ENCODE measurements at regions of chr19 and their contacts with region 1.

Region 1: GRCh38 chr19:2475702-2476450 is at the start of gene GADD45B:
- DNase-seq: peak; percentile 96 to 98 (median 96)
- H3K4me3 ChIP-seq: peak within 1 kb of the TSS; percentile 71 to 97
- H3K4me3 Mint-ChIP-seq: peak within 1 kb of the TSS; percentile 99 to 100 (median 100)
- H3K27ac ChIP-seq: peak within 1 kb of the TSS; percentile 76
- H3K27ac Mint-ChIP-seq: peak within 1 kb of the TSS; percentile 95 to 99 (median 97)
- H3K4me1 ChIP-seq: peaks cover 25% of the 10 kb centered on the region
- H3K4me1 Mint-ChIP-seq: peaks cover 6 to 36% (median 14%) of the 10 kb centered on the region in 4 donors
- H3K27me3 ChIP-seq: no peaks in the 10 kb centered on the region
- H3K27me3 Mint-ChIP-seq: no peaks in the 10 kb centered on the region
- total RNA-seq, gene GADD45B: 88.2 to 88.3 TPM

Region 2: GRCh38 chr19:1774999-1775772 is 700.7 kb before region 1 on chr19:
- CTCF ChIA-PET with region 1: no interaction called
- POLR2A ChIA-PET with region 1: no interaction called
- intact Hi-C with region 1: no loop called
- DNase-seq: peak in 1 of 5 donors; percentile 16
- H3K4me3 ChIP-seq: no peak overlapping the region
- H3K4me3 Mint-ChIP-seq: no peak overlapping the region
- H3K27ac ChIP-seq: no peak overlapping the region
- H3K27ac Mint-ChIP-seq: no peak overlapping the region
- H3K4me1 ChIP-seq: no peaks in the 10 kb centered on the region
- H3K4me1 Mint-ChIP-seq: peaks cover 0 to 6% (median under 1%) of the 10 kb centered on the region in 4 donors
- H3K27me3 ChIP-seq: peaks cover 39% of the 10 kb centered on the region
- H3K27me3 Mint-ChIP-seq: peaks cover 44 to 53% of the 10 kb centered on the region in 2 donors

Region 3: GRCh38 chr19:2355168-2356035 is 120.5 kb before region 1 on chr19:
- CTCF ChIA-PET with region 1: no interaction called
- POLR2A ChIA-PET with region 1: no interaction called
- intact Hi-C with region 1: no loop called
- DNase-seq: no peak
- H3K4me3 ChIP-seq: no peak overlapping the region
- H3K4me3 Mint-ChIP-seq: no peak overlapping the region
- H3K27ac ChIP-seq: no peak overlapping the region
- H3K27ac Mint-ChIP-seq: no peak overlapping the region
- H3K4me1 ChIP-seq: no peaks in the 10 kb centered on the region
- H3K4me1 Mint-ChIP-seq: peaks cover under 1 to 2% (median 1%) of the 10 kb centered on the region in 4 donors
- H3K27me3 ChIP-seq: no peaks in the 10 kb centered on the region
- H3K27me3 Mint-ChIP-seq: peaks cover 1% of the 10 kb centered on the region in 2 donors

Region 4: GRCh38 chr19:2391118-2391725 is 84.7 kb before region 1 on chr19:
- CTCF ChIA-PET with region 1: no interaction called
- POLR2A ChIA-PET with region 1: no interaction called
- intact Hi-C with region 1: no loop called
- DNase-seq: peak; percentile 50 to 66 (median 51)
- H3K4me3 ChIP-seq: no peak overlapping the region
- H3K4me3 Mint-ChIP-seq: peak overlapping the region in 1 of 8 donors; percentile 78
- H3K27ac ChIP-seq: no peak overlapping the region
- H3K27ac Mint-ChIP-seq: peak overlapping the region in 2 of 7 donors; percentile 53 to 69
- H3K4me1 ChIP-seq: no peaks in the 10 kb centered on the region
- H3K4me1 Mint-ChIP-seq: peaks cover 2 to 15% (median 4%) of the 10 kb centered on the region in 4 donors
- H3K27me3 ChIP-seq: no peaks in the 10 kb centered on the region
- H3K27me3 Mint-ChIP-seq: peaks cover 2% of the 10 kb centered on the region in 2 donors

Region 5: GRCh38 chr19:2427429-2428320 is 48.2 kb before region 1 on chr19 and contains the start of gene TIMM13:
- CTCF ChIA-PET with region 1: interaction called, 4 read pairs
- POLR2A ChIA-PET with region 1: interaction called, 27 read pairs
- intact Hi-C with region 1: no loop called
- DNase-seq: peak; percentile 96 to 99 (median 98)
- H3K4me3 ChIP-seq: peak within 1 kb of the TSS; percentile 61 to 79
- H3K4me3 Mint-ChIP-seq: peak within 1 kb of the TSS; percentile 90 to 97 (median 94)
- H3K27ac ChIP-seq: peak within 1 kb of the TSS; percentile 95
- H3K27ac Mint-ChIP-seq: peak within 1 kb of the TSS; percentile 93 to 99 (median 99)
- H3K4me1 ChIP-seq: peaks cover 21% of the 10 kb centered on the region
- H3K4me1 Mint-ChIP-seq: peaks cover 6 to 19% (median 12%) of the 10 kb centered on the region in 4 donors
- H3K27me3 ChIP-seq: no peaks in the 10 kb centered on the region
- H3K27me3 Mint-ChIP-seq: no peaks in the 10 kb centered on the region
- total RNA-seq, gene TIMM13: 30.6 to 31.6 TPM

Region 6: GRCh38 chr19:2507109-2507508 is 31.2 kb after region 1 on chr19:
- CTCF ChIA-PET with region 1: interaction called, 13 read pairs
- POLR2A ChIA-PET with region 1: interaction called, 271 read pairs
- intact Hi-C with region 1: loop called (anchors 1 kb)
- DNase-seq: peak; percentile 48 to 77 (median 62)
- H3K4me3 ChIP-seq: no peak overlapping the region
- H3K4me3 Mint-ChIP-seq: peak overlapping the region in 6 of 8 donors; percentile 39 to 72 (median 60)
- H3K27ac ChIP-seq: no peak overlapping the region
- H3K27ac Mint-ChIP-seq: peak overlapping the region; percentile 73 to 93 (median 83)
- H3K4me1 ChIP-seq: peaks cover 25% of the 10 kb centered on the region
- H3K4me1 Mint-ChIP-seq: peaks cover 15 to 41% (median 24%) of the 10 kb centered on the region in 4 donors
- H3K27me3 ChIP-seq: no peaks in the 10 kb centered on the region
- H3K27me3 Mint-ChIP-seq: no peaks in the 10 kb centered on the region

Region 7: GRCh38 chr19:2552859-2553258 is 77.0 kb after region 1 on chr19:
- CTCF ChIA-PET with region 1: interaction called, 19 read pairs
- POLR2A ChIA-PET with region 1: interaction called, 119 read pairs
- intact Hi-C with region 1: loop called (anchors 2 kb)
- DNase-seq: peak; percentile 74 to 84 (median 80)
- H3K4me3 ChIP-seq: peak overlapping the region; percentile 36 to 46
- H3K4me3 Mint-ChIP-seq: peak overlapping the region; percentile 52 to 93 (median 82)
- H3K27ac ChIP-seq: peak overlapping the region; percentile 12
- H3K27ac Mint-ChIP-seq: peak overlapping the region; percentile 67 to 96 (median 78)
- H3K4me1 ChIP-seq: peaks cover 24% of the 10 kb centered on the region
- H3K4me1 Mint-ChIP-seq: peaks cover 9 to 18% (median 14%) of the 10 kb centered on the region in 4 donors
- H3K27me3 ChIP-seq: no peaks in the 10 kb centered on the region
- H3K27me3 Mint-ChIP-seq: no peaks in the 10 kb centered on the region

Region 8: GRCh38 chr19:2602391-2603181 is 126.7 kb after region 1 on chr19:
- CTCF ChIA-PET with region 1: interaction called, 22 read pairs
- POLR2A ChIA-PET with region 1: interaction called, 258 read pairs
- intact Hi-C with region 1: no loop called
- DNase-seq: no peak
- H3K4me3 ChIP-seq: no peak overlapping the region
- H3K4me3 Mint-ChIP-seq: no peak overlapping the region
- H3K27ac ChIP-seq: no peak overlapping the region
- H3K27ac Mint-ChIP-seq: peak overlapping the region in 2 of 7 donors; percentile 24 to 68
- H3K4me1 ChIP-seq: peaks cover 13% of the 10 kb centered on the region
- H3K4me1 Mint-ChIP-seq: peaks cover 7 to 18% (median 12%) of the 10 kb centered on the region in 4 donors
- H3K27me3 ChIP-seq: no peaks in the 10 kb centered on the region
- H3K27me3 Mint-ChIP-seq: no peaks in the 10 kb centered on the region

Region 9: GRCh38 chr19:2636897-2637683 is 161.2 kb after region 1 on chr19:
- CTCF ChIA-PET with region 1: interaction called, 34 read pairs
- POLR2A ChIA-PET with region 1: interaction called, 53 read pairs
- intact Hi-C with region 1: loop called (anchors 1 kb)
- DNase-seq: peak; percentile 69 to 72 (median 72)
- H3K4me3 ChIP-seq: no peak overlapping the region
- H3K4me3 Mint-ChIP-seq: peak overlapping the region in 1 of 8 donors; percentile 29
- H3K27ac ChIP-seq: no peak overlapping the region
- H3K27ac Mint-ChIP-seq: no peak overlapping the region
- H3K4me1 ChIP-seq: peaks cover 10% of the 10 kb centered on the region
- H3K4me1 Mint-ChIP-seq: peaks cover 0 to 6% (median 4%) of the 10 kb centered on the region in 4 donors
- H3K27me3 ChIP-seq: no peaks in the 10 kb centered on the region
- H3K27me3 Mint-ChIP-seq: no peaks in the 10 kb centered on the region